A549 (cell line): ENCODE measurements at regions of chr10 and their contacts with region 1.

Region 1: GRCh38 chr10:63720072-63720537 is 198.9 kb downstream of the REEP3 start:
- DNase-seq: peak in 1 of 2 experiments; percentile 57
- ATAC-seq: peak in 1 of 2 experiments; percentile 62; a peak in 3 of 6 replicates
- H3K4me3 ChIP-seq: no peak overlapping the region
- H3K27ac ChIP-seq: peak overlapping the region in 1 of 2 experiments; percentile 66; a peak in 1 of 6 replicates
- H3K4me1 ChIP-seq: peaks cover 23% of the 10 kb centered on the region
- CTCF ChIP-seq: peak; percentile 99
- EP300 ChIP-seq: no peak
- POLR2A ChIP-seq: no peak
- RAD21 ChIP-seq: peak; percentile 96 to 97

Region 2: GRCh38 chr10:63157845-63158624 is 562.1 kb before region 1 on chr10:
- CTCF ChIA-PET with region 1: interaction called, 20 read pairs
- POLR2A ChIA-PET with region 1: no interaction called
- DNase-seq: peak; percentile 57 to 92
- ATAC-seq: peak; percentile 80 to 88
- H3K4me3 ChIP-seq: no peak overlapping the region
- H3K27ac ChIP-seq: no peak overlapping the region
- H3K4me1 ChIP-seq: no peaks in the 10 kb centered on the region
- CTCF ChIP-seq: peak; percentile 85
- EP300 ChIP-seq: no peak
- POLR2A ChIP-seq: no peak
- RAD21 ChIP-seq: peak; percentile 89 to 91

Region 3: GRCh38 chr10:63217120-63217605 is 502.9 kb before region 1 on chr10:
- CTCF ChIA-PET with region 1: interaction called, 34 read pairs
- POLR2A ChIA-PET with region 1: no interaction called
- DNase-seq: peak; percentile 39 to 61
- ATAC-seq: peak; percentile 85 to 94
- H3K4me3 ChIP-seq: no peak overlapping the region
- H3K27ac ChIP-seq: no peak overlapping the region
- H3K4me1 ChIP-seq: peaks cover 12% of the 10 kb centered on the region; the same call in 2 of the 3 replicates
- CTCF ChIP-seq: peak; percentile 88
- EP300 ChIP-seq: no peak
- POLR2A ChIP-seq: no peak
- RAD21 ChIP-seq: peak; percentile 72 to 80

Region 4: GRCh38 chr10:63227207-63227915 is 492.7 kb before region 1 on chr10:
- CTCF ChIA-PET with region 1: no interaction called
- POLR2A ChIA-PET with region 1: no interaction called
- DNase-seq: no peak
- ATAC-seq: no peak
- H3K4me3 ChIP-seq: no peak overlapping the region
- H3K27ac ChIP-seq: no peak overlapping the region
- H3K4me1 ChIP-seq: peaks cover 27% of the 10 kb centered on the region
- CTCF ChIP-seq: no peak
- EP300 ChIP-seq: no peak
- POLR2A ChIP-seq: no peak
- RAD21 ChIP-seq: no peak

Region 5: GRCh38 chr10:63588436-63589167 is 131.5 kb before region 1 on chr10:
- CTCF ChIA-PET with region 1: interaction called, 12 read pairs
- POLR2A ChIA-PET with region 1: no interaction called
- DNase-seq: peak in 1 of 2 experiments; percentile 17
- ATAC-seq: peak in 1 of 2 experiments; percentile 23; a peak in 2 of 6 replicates
- H3K4me3 ChIP-seq: no peak overlapping the region
- H3K27ac ChIP-seq: no peak overlapping the region; a peak in 1 of 6 replicates
- H3K4me1 ChIP-seq: peaks cover 10% of the 10 kb centered on the region
- CTCF ChIP-seq: no peak
- EP300 ChIP-seq: no peak
- POLR2A ChIP-seq: no peak
- RAD21 ChIP-seq: no peak

Region 6: GRCh38 chr10:63636812-63637211 is 83.3 kb before region 1 on chr10:
- CTCF ChIA-PET with region 1: interaction called, 153 read pairs
- POLR2A ChIA-PET with region 1: no interaction called
- DNase-seq: no peak
- ATAC-seq: no peak
- H3K4me3 ChIP-seq: no peak overlapping the region
- H3K27ac ChIP-seq: no peak overlapping the region
- H3K4me1 ChIP-seq: peaks cover 11% of the 10 kb centered on the region
- CTCF ChIP-seq: no peak
- EP300 ChIP-seq: no peak
- POLR2A ChIP-seq: no peak
- RAD21 ChIP-seq: no peak

Region 7: DNA sequence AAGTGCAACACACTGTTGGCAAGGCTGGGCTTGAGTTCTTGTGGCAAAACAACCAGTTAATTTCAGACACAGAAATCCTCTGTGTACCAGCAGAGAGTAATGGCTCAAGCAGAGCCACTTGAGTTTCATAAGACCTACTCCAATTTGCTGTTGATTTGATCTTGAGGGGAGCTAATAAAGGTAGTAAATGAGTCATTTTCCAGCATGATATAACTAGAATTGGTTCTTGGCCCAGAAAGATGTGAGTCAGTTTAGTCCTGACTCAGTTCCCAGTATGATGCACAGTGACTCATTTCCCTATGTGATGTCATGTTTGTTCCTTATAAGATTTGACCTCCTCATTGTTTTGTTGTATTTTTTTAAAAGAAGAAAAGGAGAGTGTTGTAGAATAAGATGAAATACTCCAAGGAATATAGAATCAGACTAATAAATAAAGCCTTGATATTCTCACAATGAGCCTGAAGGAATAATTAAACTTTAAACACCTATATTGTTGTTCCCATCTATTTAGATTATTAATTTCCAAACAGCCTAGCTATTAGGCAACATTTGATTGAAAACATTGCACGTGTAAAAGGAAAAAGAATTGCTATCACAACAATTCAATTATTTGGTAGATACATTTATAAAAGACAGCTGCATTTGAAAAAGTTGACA is 12.7 kb before region 1 on chr10:
- CTCF ChIA-PET with region 1: interaction called, 85 read pairs
- POLR2A ChIA-PET with region 1: interaction called, 3 read pairs
- DNase-seq: peak; percentile 75 to 91
- ATAC-seq: peak; percentile 79 to 87
- H3K4me3 ChIP-seq: no peak overlapping the region
- H3K27ac ChIP-seq: peak overlapping the region; percentile 2 to 48; a peak in 2 of 6 replicates
- H3K4me1 ChIP-seq: peaks cover 45% of the 10 kb centered on the region
- CTCF ChIP-seq: no peak
- EP300 ChIP-seq: peak; percentile 39 to 50; a peak in 2 of 5 replicates
- POLR2A ChIP-seq: no peak
- RAD21 ChIP-seq: no peak; a peak in 1 of 5 replicates

Region 8: DNA sequence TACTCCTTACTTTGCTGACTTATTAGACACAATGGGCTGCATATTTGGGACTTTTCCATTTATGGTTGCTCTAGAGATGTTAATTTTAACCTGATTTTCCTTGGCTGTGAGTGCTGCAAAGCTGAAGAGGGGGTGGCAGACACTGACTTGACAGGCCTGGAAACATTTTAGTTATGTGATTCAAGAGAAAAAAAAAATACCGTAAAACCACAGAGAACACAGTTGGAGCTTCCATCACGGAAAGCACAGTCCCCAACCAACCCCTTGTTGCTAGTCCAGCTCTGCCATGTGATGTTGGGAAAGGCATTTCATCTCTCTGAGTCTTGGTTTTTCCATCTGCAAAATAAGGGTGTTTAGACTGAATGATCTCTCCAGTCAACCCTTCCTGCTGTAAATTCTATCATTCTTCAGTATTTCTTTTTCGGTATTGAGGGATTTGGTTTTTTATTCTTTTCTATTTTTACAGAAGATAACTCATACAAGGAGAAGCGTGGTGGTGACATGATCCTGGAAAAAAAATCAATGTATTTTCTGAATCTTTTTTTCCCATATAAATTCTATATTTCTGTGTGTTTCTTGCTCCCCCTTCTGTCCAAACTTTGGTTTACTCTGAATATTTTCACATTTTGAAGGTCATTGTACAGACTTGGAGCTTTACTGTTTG is 47.2 kb after region 1 on chr10:
- CTCF ChIA-PET with region 1: interaction called, 58 read pairs
- POLR2A ChIA-PET with region 1: no interaction called
- DNase-seq: peak in 1 of 2 experiments; percentile 18
- ATAC-seq: 0 out of 6 replicates have a peak, but pooled peaks of 1 of the 2 experiments have one; percentile 44
- H3K4me3 ChIP-seq: no peak overlapping the region
- H3K27ac ChIP-seq: no peak overlapping the region
- H3K4me1 ChIP-seq: no peaks in the 10 kb centered on the region
- CTCF ChIP-seq: peak; percentile 76
- EP300 ChIP-seq: no peak
- POLR2A ChIP-seq: no peak
- RAD21 ChIP-seq: peak; percentile 73 to 75

Region 9: GRCh38 chr10:63901228-63901627 is 181.1 kb after region 1 on chr10:
- CTCF ChIA-PET with region 1: no interaction called
- POLR2A ChIA-PET with region 1: no interaction called
- DNase-seq: peak in 1 of 2 experiments; percentile 4
- ATAC-seq: peak in 1 of 2 experiments; percentile 72; a peak in 4 of 6 replicates
- H3K4me3 ChIP-seq: no peak overlapping the region
- H3K27ac ChIP-seq: no peak overlapping the region
- H3K4me1 ChIP-seq: no peaks in the 10 kb centered on the region
- CTCF ChIP-seq: no peak; the same call in 2 of the 3 replicates
- EP300 ChIP-seq: no peak
- POLR2A ChIP-seq: no peak
- RAD21 ChIP-seq: no peak

Region 10: GRCh38 chr10:64101606-64102263 is 381.6 kb after region 1 on chr10:
- CTCF ChIA-PET with region 1: no interaction called
- POLR2A ChIA-PET with region 1: no interaction called
- DNase-seq: no peak
- ATAC-seq: no peak
- H3K4me3 ChIP-seq: no peak overlapping the region
- H3K27ac ChIP-seq: no peak overlapping the region
- H3K4me1 ChIP-seq: no peaks in the 10 kb centered on the region
- CTCF ChIP-seq: no peak
- EP300 ChIP-seq: no peak
- POLR2A ChIP-seq: no peak
- RAD21 ChIP-seq: no peak

Region 11: GRCh38 chr10:64219271-64220025 is 499.3 kb after region 1 on chr10:
- CTCF ChIA-PET with region 1: no interaction called
- POLR2A ChIA-PET with region 1: no interaction called
- DNase-seq: no peak
- ATAC-seq: no peak
- H3K4me3 ChIP-seq: no peak overlapping the region
- H3K27ac ChIP-seq: no peak overlapping the region
- H3K4me1 ChIP-seq: no peaks in the 10 kb centered on the region
- CTCF ChIP-seq: no peak
- EP300 ChIP-seq: no peak
- POLR2A ChIP-seq: no peak
- RAD21 ChIP-seq: no peak